CD8-positive, alpha-beta memory T cell (primary cell): ENCODE measurements at regions of chr3 and their contacts with region 1.

Region 1: GRCh38 chr3:172332256-172333041 is 115.8 kb downstream of the GHSR start:
- DNase-seq: peak; percentile 27 to 70 (median 35)
- H3K4me3 ChIP-seq: no peak overlapping the region
- H3K4me3 Mint-ChIP-seq: no peak overlapping the region
- H3K27ac ChIP-seq: no peak overlapping the region
- H3K27ac Mint-ChIP-seq: peak overlapping the region in 3 of 8 donors; percentile 17 to 47 (median 30)
- H3K4me1 ChIP-seq: no peaks in the 10 kb centered on the region
- H3K4me1 Mint-ChIP-seq: peaks cover 4 to 10% (median 5%) of the 10 kb centered on the region in 3 donors
- H3K27me3 ChIP-seq: no peaks in the 10 kb centered on the region
- H3K27me3 Mint-ChIP-seq: no peaks in the 10 kb centered on the region

Region 2: GRCh38 chr3:172666873-172667694 is 334.6 kb after region 1 on chr3:
- CTCF ChIA-PET with region 1: interaction called, 19 read pairs
- POLR2A ChIA-PET with region 1: interaction called, 5 read pairs
- DNase-seq: peak; percentile 60 to 82 (median 68)
- H3K4me3 ChIP-seq: no peak overlapping the region
- H3K4me3 Mint-ChIP-seq: peak overlapping the region in 3 of 7 donors; percentile 30 to 70 (median 65)
- H3K27ac ChIP-seq: no peak overlapping the region
- H3K27ac Mint-ChIP-seq: peak overlapping the region in 1 of 8 donors; percentile 25
- H3K4me1 ChIP-seq: peaks cover 12% of the 10 kb centered on the region
- H3K4me1 Mint-ChIP-seq: peaks cover 22 to 32% (median 27%) of the 10 kb centered on the region in 3 donors
- H3K27me3 ChIP-seq: no peaks in the 10 kb centered on the region
- H3K27me3 Mint-ChIP-seq: no peaks in the 10 kb centered on the region